Heart right ventricle (tissue), 16 donors: ENCODE measurements at regions of chr1 and their contacts with region 1.

Region 1: GRCh38 chr1:204307334-204307883 is 52.3 kb downstream of the PLEKHA6 start:
- DNase-seq: no peak
- ATAC-seq: peak; percentile 75 to 95 (median 88)
- H3K4me3 ChIP-seq: peak overlapping the region in 5 of 10 donors; percentile 31 to 42 (median 38)
- H3K27ac ChIP-seq: peak overlapping the region in 4 of 10 donors; percentile 11 to 53 (median 28)
- H3K4me1 ChIP-seq: peaks cover 0 to 13% (median 0%) of the 10 kb centered on the region in 9 donors
- H3K27me3 ChIP-seq: no peaks in the 10 kb centered on the region
- CTCF ChIP-seq: peak in 5 of 9 donors; percentile 9 to 53 (median 48)

Region 2: DNA sequence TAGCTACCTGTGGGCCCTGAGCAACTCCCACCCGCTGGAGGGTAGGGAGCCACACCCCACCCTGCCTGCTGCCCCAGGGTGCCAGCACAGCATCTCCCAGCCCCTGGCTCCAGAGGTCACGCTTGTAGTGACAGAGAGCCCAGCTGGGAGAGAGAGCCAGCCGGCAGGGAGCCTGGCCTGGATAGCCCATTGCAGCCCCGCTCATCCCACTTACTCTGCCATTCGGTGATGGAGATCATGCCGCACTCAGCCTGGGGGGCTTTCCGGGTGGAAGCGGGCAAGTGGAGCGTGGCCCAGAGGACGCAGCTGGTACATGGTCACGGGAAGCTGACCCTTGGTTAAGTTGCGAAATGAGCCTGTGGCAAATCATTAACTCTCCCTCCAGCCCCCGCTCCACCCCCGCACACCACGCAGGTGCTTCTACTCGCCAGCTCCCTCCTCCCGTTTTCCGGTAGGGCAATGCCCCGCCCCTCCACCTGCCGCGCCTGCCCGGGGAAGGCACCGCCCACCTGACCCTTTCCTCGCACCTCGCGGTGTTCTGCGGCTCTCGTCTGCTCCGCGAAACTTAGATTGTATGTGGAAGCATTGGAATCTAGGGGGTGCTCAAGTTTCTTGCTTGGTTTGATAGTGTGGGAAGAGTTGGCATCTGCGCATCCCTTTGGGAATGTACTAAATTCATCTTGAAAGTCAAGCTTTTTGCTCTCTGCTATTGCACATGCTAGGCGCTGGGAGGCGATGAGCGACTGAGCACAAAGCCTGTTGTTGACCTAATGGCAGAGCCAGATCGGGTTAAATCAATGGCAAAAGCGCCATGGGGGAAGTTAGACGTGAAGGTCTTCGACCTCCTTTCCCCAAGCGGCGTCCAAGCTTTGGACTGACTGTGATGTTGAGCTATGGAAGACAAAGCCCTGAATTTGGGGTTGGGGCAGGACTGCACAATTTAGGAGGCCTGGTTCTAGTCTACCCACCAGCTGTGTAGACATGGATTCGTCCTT is 93.4 kb before region 1 on chr1 and contains the start of gene GOLT1A:
- intact Hi-C with region 1: loop called in 1 of 10 experiments (anchors 10 kb)
- DNase-seq: peak; percentile 57 to 58
- ATAC-seq: peak; percentile 51 to 83 (median 79)
- H3K4me3 ChIP-seq: peak within 1 kb of the TSS in 8 of 10 donors; percentile 14 to 40 (median 27)
- H3K27ac ChIP-seq: no peak within 1 kb of the TSS
- H3K4me1 ChIP-seq: peaks cover 0 to 13% (median 7%) of the 10 kb centered on the region in 9 donors
- H3K27me3 ChIP-seq: peaks cover 0 to 11% (median 0%) of the 10 kb centered on the region in 7 donors
- CTCF ChIP-seq: peak; percentile 49 to 80 (median 72)
- total RNA-seq, gene GOLT1A: not detected

Region 3: DNA sequence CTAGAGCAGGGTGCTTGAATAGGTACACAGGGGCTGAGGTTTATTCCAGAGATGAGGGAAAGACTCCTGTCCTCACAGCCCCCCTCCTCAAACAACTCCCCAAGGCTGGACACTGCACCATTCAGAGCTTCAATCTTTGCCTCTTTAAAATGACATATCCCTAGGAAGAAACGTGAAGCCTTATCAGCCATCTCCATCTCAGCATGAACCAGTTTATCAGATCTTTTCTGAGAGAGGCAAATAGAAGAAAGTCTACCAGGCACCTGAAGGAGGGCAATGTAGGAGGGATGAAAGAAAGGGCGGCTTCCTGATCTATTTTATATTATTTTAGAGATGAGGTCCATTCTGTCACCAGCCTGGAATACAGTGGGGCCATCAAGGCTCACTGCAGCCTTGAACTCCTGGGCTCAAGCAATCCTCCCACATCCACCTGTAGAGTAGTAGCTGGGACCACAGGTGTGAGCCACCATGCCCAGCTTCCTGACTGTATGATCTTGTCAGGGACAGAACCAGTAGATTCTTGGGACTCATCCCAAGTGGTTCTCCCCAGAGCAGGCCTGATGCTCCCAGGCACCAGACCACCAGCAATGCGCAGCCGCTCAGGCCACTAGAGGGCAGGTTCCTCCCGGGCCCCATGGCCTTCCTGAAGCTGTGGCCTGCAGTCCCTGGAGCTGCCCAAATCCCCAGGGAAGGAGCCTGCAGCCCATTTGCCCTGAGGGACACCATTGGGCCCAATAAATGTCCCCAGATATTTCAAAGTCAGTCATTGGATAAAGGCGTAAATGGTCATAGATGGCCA is 49.3 kb before region 1 on chr1:
- intact Hi-C with region 1: loop called in 1 of 10 experiments (anchors 5 kb)
- DNase-seq: peak; percentile 59 to 64
- ATAC-seq: peak; percentile 56 to 82 (median 68)
- H3K4me3 ChIP-seq: no peak overlapping the region
- H3K27ac ChIP-seq: no peak overlapping the region
- H3K4me1 ChIP-seq: peaks cover 0 to 18% (median 7%) of the 10 kb centered on the region in 9 donors
- H3K27me3 ChIP-seq: no peaks in the 10 kb centered on the region
- CTCF ChIP-seq: peak; percentile 44 to 77 (median 69)

Region 4: GRCh38 chr1:204363335-204364124 is 56.1 kb after region 1 on chr1:
- intact Hi-C with region 1: no loop called
- DNase-seq: peak; percentile 76 to 81
- ATAC-seq: peak; percentile 70 to 85 (median 84)
- H3K4me3 ChIP-seq: peak overlapping the region in 9 of 10 donors; percentile 24 to 59 (median 47)
- H3K27ac ChIP-seq: peak overlapping the region in 9 of 10 donors; percentile 57 to 81 (median 69)
- H3K4me1 ChIP-seq: peaks cover 4 to 57% (median 34%) of the 10 kb centered on the region in 9 donors
- H3K27me3 ChIP-seq: peaks cover 0 to 17% (median 0%) of the 10 kb centered on the region in 7 donors
- CTCF ChIP-seq: peak; percentile 93 to 98 (median 96)